HEK293T (cell line): ENCODE measurements at regions of chr12 and their contacts with region 1.

Region 1: DNA sequence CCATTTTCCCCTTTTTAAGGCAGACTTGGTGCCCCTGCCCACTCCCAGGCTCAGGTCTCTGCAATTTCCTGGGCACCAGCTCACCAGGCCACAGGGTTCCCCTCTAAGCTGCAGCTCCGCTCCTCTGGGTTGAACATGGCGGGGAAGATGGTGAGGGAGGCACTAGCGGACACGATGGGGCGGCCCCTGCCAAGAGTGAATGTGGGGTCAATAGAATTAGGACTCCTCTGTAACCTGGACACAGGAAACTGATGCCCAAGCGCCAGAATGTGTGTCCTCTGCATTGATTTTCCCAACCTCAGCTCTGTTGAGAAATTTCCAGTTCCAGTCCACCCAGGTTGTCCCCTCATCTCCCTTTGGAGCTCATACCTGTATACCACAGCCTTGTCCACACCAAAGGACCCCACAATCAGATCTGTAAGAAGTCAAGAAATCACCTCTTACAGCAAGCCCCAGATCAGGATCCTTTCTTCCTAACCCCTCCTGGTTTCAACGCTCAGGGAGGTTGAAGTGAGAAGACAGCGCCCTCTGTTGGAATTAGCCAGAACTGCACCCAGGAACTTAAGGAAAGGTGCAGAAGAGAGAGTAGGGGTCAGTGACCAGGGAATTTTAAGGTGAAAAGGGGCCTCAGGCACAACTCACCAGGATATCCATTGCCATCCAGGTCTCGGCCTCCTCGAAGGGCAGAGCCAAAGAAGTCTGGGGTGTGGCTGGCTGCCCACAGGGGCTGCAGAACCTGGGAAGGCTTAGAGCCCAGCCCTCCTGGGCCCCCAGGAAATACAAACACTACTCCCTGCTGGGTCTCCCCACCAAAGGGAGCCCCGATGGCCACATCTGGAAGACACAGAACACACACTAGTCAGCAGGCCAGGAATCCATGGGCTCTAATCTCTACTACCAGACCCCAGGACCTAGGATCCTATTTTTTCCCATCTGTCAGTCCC is 14.7 kb downstream of the ITGA5 start:
- DNase-seq: peak; percentile 70

Region 2: DNA sequence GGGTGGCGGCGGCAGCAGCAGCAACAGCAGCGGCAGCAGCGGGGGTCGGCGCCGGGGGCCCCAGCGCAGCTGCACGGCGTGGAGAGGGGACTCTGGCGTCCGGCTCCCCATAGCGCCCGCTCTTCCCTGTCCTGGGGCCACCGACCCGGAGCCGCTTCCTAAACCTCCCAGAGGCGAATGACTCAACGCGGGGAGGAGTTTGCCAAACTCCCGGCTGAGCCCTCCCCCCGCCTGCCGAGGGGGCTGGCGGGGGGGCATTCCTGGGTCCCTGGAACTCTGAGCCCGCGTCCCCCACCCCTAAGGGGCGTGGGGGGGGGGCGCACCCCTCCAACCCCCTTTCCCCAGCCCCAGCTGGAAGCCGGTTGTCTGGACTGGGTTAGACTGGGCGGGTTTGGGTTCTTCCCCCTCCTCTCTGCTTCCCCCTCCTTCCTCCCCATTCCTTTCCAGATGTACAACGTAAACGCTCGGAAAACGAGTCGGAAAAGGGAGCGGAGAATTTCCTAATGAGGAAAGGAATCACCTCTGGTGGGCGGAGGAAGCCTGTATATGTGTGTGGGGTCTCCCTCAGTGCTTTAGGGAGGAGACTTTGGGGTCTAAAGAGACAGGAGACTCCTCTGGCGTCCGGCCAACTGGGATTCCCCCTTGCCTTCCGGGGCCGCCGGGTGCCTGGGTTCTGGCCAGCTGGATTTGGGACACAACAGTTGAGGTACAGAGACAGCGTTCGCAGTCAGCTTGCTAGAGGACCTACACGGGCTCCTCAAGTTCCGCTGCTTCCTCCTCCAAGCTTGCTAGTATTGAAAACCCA is 15.0 kb after region 1 on chr12 and contains the start of gene ITGA5:
- CTCF ChIA-PET with region 1: interaction called, 26 read pairs
- POLR2A ChIA-PET with region 1: interaction called, 9 read pairs
- DNase-seq: peak; percentile 73

Region 3: DNA sequence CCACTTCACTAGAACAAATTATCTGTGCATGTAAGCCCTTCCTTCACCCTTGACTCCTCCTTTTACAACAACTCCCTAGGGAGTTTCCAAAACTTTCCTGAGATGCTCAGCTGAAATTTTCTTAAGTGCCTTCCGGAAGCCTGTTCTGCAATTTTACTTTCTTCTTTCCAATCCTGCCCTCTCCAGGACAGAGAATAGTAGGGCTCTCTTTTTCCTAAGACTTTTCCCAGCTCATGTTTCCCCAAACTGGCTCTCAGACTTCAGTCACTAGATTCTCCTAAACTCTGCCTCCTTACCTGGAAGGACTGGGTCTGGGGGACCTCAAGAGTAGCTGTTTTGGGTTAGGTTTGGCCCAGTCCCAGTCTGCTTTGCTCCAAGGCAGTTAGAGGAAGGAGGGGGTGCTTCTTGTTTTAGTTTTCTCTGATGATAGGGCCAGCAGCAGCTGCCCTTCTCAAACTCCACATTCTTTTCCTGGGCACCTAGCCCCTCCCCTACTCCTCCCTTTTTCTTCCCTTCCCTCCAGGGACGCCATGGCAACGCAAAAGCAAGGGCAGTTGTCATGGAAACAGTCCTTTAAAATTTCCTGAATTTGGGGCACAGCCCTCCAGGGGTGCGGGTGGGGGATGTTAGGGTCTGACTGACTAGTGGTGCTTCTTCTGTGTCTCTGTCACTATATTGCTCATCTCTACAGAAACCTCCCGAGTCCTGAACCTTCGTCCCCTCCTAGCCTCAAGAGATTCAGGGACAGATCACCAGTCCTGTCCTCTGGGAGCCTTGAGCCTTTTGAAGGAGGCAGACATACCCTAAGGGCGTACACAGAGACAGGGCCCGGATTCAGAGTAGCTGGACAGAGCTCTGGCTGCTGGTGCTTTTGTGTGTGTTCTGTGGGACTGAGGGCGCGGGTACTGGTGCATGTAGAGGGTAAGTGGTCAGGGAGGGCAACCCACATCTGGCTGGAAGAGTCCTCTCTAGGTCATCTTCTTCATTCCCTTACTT is 167.2 kb after region 1 on chr12:
- CTCF ChIA-PET with region 1: no interaction called
- POLR2A ChIA-PET with region 1: no interaction called
- DNase-seq: no peak